SK-N-SH (cell line): ENCODE measurements at regions of chr11 and their contacts with region 1.

Region 1: DNA sequence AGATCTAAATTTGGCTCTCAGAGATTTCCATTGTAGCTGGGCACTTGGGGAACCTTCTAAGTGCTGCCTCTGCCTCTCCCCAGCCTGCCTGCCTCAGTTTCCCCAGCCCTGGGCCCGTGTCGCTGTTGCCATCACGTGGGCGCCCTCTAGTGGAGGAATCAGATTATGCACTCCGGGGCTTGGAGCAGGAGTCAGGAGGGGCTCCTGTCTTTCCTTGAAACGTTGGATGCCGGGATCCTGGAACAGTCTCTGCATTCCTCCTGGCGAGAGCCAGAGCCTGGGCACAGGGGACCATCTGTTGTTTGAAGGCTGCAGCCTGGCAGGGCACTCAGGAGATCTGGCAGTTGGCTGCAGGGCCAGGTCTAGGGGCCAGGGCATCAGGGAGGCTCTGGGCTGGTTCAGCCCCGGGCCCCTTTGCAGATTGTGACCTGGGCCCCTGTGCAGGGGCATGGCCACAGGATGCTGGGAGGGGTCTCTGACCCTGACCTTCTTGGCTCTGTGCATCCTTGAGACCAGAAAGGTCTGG is 71.6 kb downstream of the LRP5 start:
- DNase-seq: peak; percentile 87
- H3K4me3 ChIP-seq: peak overlapping the region in 1 of 2 experiments; percentile 33; a peak in 1 of 4 replicates
- H3K27ac ChIP-seq: no peak overlapping the region; a peak in 1 of 4 replicates
- H3K4me1 ChIP-seq: peaks cover 0 to 16% of the 10 kb centered on the region in 2 experiments; a peak in 1 of 4 replicates
- H3K27me3 ChIP-seq: no peaks in the 10 kb centered on the region
- CTCF ChIP-seq: peak; percentile 98
- EP300 ChIP-seq: no peak
- RAD21 ChIP-seq: peak; percentile 89

Region 2: DNA sequence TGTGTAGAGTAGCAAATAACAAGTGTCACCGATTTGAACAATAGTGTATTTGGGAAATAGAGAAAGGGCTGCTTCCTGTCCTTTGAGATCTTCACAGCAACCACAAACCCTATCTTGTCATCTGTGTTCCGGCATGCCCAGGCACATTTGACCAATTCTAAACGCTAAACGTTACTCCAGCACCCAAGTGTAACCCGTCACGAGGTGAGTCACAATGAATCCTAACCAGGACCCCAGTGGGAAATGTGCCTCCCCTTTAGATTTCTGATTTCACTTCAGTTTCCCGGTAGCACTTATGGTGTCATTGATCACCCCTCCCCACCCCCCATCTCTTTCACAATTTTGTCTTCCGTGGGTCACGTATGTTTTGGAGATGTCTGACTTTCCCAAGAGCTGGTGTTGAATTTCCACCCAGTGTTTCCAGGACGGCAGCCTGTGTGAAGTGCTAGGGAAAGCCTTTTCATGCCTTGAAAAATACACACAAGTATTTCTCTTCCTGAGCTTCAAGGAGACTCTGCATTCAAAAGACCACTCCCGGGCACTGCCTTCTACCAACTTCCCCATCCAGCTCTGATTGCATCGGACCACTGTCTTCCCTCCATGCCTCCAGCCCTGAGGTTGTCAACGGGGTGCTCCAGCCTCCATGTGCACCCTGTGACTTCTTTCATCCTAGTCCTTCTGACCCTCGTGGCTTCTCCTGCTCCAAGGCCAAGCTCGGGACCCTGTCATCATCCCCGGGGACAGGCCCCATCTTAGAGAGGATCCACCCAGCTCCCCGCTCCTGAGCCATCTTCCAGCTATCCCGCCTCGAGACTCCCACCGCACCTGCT is 101.7 kb before region 1 on chr11:
- CTCF ChIA-PET with region 1: no interaction called
- POLR2A ChIA-PET with region 1: no interaction called
- DNase-seq: no peak
- H3K4me3 ChIP-seq: no peak overlapping the region
- H3K27ac ChIP-seq: no peak overlapping the region
- H3K4me1 ChIP-seq: no peaks in the 10 kb centered on the region
- H3K27me3 ChIP-seq: no peaks in the 10 kb centered on the region
- CTCF ChIP-seq: no peak
- EP300 ChIP-seq: no peak
- RAD21 ChIP-seq: no peak

Region 3: DNA sequence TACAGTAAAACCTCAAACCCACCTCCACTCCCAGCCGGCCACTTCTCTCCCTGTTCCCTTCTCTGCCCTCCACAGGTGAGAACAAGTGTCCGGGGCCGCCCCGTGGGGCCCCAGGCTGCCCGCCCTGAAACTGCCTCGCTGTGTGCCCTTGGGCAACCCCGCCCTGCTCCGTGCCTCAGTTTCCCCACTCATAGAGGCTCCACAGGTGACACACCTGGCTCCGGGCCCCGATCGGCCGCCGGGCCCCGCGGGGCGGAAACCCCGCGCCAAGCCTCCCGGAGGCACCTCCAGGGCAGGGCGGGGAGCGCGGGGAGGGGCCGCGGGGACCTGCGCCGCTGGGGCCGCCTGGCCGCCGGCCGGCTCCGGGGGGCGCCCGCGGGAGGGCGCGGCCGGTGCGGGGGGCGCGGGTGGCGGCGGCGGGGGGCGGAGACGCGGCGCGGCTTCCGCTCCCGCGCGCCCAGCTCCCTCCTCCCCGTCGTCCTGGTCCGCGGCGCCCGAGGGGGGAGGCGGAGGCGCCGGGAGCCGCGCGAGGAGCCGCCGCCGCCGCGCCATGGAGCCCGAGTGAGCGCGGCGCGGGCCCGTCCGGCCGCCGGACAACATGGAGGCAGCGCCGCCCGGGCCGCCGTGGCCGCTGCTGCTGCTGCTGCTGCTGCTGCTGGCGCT is 71.8 kb before region 1 on chr11 and contains the start of gene LRP5:
- CTCF ChIA-PET with region 1: interaction called, 10 read pairs
- POLR2A ChIA-PET with region 1: no interaction called
- DNase-seq: peak; percentile 94
- H3K4me3 ChIP-seq: peak within 1 kb of the TSS; percentile 67 to 75
- H3K27ac ChIP-seq: peak within 1 kb of the TSS; percentile 63 to 79; a peak in 3 of 4 replicates
- H3K4me1 ChIP-seq: peaks cover 19 to 28% of the 10 kb centered on the region in 2 experiments; a peak in 2 of 4 replicates
- H3K27me3 ChIP-seq: no peaks in the 10 kb centered on the region
- CTCF ChIP-seq: no peak
- EP300 ChIP-seq: no peak
- RAD21 ChIP-seq: no peak
- polyA plus RNA-seq, gene LRP5: 10.2 and 15.0 TPM in 2 replicates

Region 4: DNA sequence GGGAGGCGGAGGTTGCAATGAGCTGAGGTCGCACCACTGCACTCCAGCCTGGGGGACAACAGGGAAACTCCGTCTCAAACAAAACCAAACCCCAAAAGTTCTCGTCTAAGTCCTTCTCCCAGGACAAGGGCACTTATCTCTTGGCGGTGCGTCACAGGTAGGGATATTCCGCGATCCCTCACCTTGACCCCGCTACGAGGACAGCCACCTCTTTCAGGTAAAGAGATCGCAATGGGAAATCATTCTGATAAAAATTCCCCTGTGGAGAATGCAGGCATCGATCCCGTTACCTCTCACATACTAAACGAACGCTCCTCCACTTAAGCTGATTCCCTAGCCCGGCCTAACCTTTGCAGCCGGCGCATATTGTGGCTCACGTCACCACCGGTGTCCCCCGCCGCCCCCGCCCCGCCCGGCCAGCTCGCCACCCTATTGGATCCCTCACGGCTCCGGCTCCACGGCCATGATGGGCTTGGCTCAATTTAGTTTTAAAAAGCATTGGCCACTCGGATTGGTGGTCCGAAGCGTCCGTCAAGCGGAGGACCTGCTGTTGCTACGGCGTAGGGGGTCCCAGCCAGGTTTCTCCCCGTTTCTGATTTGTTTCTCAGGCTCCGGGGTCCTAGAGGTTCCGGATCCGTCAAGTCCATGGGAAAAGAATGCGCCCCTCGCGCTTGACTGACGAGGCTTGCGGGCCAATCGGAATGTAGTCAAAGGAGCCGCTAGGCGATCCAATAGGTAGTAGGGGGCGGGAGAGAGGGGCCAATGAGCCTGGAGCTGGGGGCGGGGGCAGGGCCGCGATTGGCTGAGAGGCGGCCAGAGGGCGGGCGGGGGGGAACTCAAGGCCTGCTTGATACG is 76.1 kb after region 1 on chr11:
- CTCF ChIA-PET with region 1: no interaction called
- POLR2A ChIA-PET with region 1: no interaction called
- DNase-seq: peak; percentile 99
- H3K4me3 ChIP-seq: peak overlapping the region; percentile 81 to 84
- H3K27ac ChIP-seq: peak overlapping the region; percentile 85 to 88
- H3K4me1 ChIP-seq: peaks cover 0 to 15% of the 10 kb centered on the region in 2 experiments; a peak in 2 of 4 replicates
- H3K27me3 ChIP-seq: no peaks in the 10 kb centered on the region
- CTCF ChIP-seq: no peak
- EP300 ChIP-seq: peak in 1 of 2 experiments; percentile 71; a peak in 2 of 4 replicates
- RAD21 ChIP-seq: no peak